CD4-positive, alpha-beta T cell (primary cell): ENCODE measurements at regions of chr22 and their contacts with region 1.

Region 1: GRCh38 chr22:40385036-40385782 is 14.8 kb downstream of the SGSM3 start:
- DNase-seq: peak in 8 of 14 experiments; percentile 19 to 78 (median 44)
- ATAC-seq: peak; percentile 96
- H3K4me3 ChIP-seq: peak overlapping the region; percentile 37
- H3K4me3 Mint-ChIP-seq: peak overlapping the region; percentile 82
- H3K27ac ChIP-seq: peak overlapping the region; percentile 50 to 67
- H3K27ac Mint-ChIP-seq: peak overlapping the region; percentile 90
- H3K4me1 ChIP-seq: peaks cover 42% of the 10 kb centered on the region
- H3K4me1 Mint-ChIP-seq: peaks cover 65% of the 10 kb centered on the region
- H3K27me3 ChIP-seq: no peaks in the 10 kb centered on the region
- H3K27me3 Mint-ChIP-seq: no peaks in the 10 kb centered on the region
- CTCF ChIP-seq: no peak

Region 2: GRCh38 chr22:40368016-40368415 is 17.2 kb before region 1 on chr22:
- CTCF ChIA-PET with region 1: interaction called, 6 read pairs
- POLR2A ChIA-PET with region 1: interaction called, 17 read pairs
- intact Hi-C with region 1: loop called in 1 of 2 experiments (anchors 2 kb)
- DNase-seq: no peak
- ATAC-seq: no peak
- H3K4me3 ChIP-seq: no peak overlapping the region
- H3K4me3 Mint-ChIP-seq: peak overlapping the region; percentile 13
- H3K27ac ChIP-seq: no peak overlapping the region
- H3K27ac Mint-ChIP-seq: peak overlapping the region; percentile 39
- H3K4me1 ChIP-seq: peaks cover 14% of the 10 kb centered on the region
- H3K4me1 Mint-ChIP-seq: peaks cover 14% of the 10 kb centered on the region
- H3K27me3 ChIP-seq: no peaks in the 10 kb centered on the region
- H3K27me3 Mint-ChIP-seq: no peaks in the 10 kb centered on the region
- CTCF ChIP-seq: no peak

Region 3: GRCh38 chr22:40400159-40400558 is 14.9 kb after region 1 on chr22:
- CTCF ChIA-PET with region 1: interaction called, 3 read pairs
- POLR2A ChIA-PET with region 1: interaction called, 17 read pairs
- intact Hi-C with region 1: loop called in 1 of 2 experiments (anchors 1 kb)
- DNase-seq: peak in 13 of 14 experiments; percentile 17 to 84 (median 47)
- ATAC-seq: peak; percentile 63
- H3K4me3 ChIP-seq: no peak overlapping the region
- H3K4me3 Mint-ChIP-seq: peak overlapping the region; percentile 78
- H3K27ac ChIP-seq: peak overlapping the region in 1 of 2 donors; percentile 3
- H3K27ac Mint-ChIP-seq: peak overlapping the region; percentile 90
- H3K4me1 ChIP-seq: peaks cover 76% of the 10 kb centered on the region
- H3K4me1 Mint-ChIP-seq: peaks cover 84% of the 10 kb centered on the region
- H3K27me3 ChIP-seq: no peaks in the 10 kb centered on the region
- H3K27me3 Mint-ChIP-seq: no peaks in the 10 kb centered on the region
- CTCF ChIP-seq: no peak

Region 4: DNA sequence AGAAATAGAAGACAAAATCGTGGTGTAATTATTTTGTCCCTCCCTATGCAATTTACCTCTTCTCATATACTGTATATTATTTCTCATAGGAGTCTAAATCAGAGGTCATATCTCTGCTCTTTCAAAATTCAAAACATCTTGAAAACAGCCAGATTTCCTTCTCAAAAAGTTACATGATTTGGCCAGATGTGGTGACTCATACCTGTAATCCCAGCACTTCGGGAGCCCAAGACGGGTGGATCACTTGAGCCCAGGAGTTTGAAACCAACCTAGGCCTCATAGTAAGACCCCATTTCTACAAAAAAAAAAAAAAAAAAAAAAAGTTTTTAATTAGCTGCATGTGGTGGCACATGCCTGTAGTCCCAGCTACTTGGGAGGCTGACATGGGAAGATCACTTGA is 505.7 kb after region 1 on chr22:
- CTCF ChIA-PET with region 1: no interaction called
- POLR2A ChIA-PET with region 1: no interaction called
- intact Hi-C with region 1: no loop called
- DNase-seq: no peak
- ATAC-seq: no peak
- H3K4me3 ChIP-seq: no peak overlapping the region
- H3K4me3 Mint-ChIP-seq: no peak overlapping the region
- H3K27ac ChIP-seq: no peak overlapping the region
- H3K27ac Mint-ChIP-seq: no peak overlapping the region
- H3K4me1 ChIP-seq: no peaks in the 10 kb centered on the region
- H3K4me1 Mint-ChIP-seq: no peaks in the 10 kb centered on the region
- H3K27me3 ChIP-seq: no peaks in the 10 kb centered on the region
- H3K27me3 Mint-ChIP-seq: no peaks in the 10 kb centered on the region
- CTCF ChIP-seq: no peak